RWPE1 (cell line): ENCODE measurements at regions of chr14 and their contacts with region 1.

Region 1: DNA sequence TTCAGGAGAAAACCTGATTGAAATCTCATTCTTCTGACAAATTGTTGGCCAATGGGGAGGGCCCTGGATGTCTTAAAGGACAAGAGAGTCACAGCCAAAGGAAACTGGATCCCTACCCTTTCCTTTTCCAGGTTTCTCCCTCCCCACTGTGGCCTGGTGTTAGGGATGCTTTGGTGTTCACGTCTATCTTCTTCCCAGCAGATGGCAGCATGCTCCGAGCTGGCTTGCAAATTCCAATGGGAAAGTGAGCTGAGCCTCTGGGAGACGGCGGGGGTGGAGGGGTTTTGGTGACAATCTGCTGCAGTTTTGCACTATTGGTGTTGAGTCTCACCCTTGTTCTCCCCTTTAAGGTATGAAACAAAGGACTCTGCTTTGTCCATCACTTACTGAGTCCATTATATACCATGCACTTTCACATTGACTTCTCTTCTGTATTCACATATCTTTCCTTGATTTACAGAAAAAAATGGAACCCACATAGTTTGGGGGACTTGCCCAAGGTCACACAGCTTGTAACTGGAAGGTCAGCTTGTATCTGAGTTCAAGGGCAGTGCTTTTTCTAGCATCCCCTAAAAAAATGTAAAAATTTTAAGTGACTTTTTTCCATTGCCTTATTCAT is 39.3 kb downstream of the CCDC177 start:
- DNase-seq: peak; percentile 76
- H3K27ac ChIP-seq: no peak overlapping the region
- CTCF ChIP-seq: peak; percentile 86

Region 2: DNA sequence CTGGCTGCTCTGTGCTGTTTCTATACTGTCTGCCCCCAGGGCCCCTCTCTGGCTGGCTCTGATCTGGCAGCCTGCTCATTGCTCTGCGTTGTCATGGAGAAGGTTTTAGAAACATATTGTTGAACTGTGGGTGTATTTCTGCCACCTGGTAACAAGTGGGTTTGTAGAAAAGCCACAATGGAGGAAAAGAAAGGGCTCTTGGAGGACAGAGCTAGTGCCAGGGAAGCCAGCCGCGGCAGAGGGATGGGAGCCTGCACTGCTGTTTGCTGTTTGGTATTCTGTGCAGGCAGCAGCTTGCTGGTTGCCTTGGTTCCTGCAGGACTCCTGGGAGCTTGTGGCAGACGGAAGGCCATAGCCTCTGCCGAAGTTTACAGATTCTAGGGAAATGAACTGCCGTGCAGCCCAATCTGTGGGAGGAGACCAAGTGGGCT is 24.3 kb after region 1 on chr14:
- CTCF ChIA-PET with region 1: interaction called, 11 read pairs
- POLR2A ChIA-PET with region 1: no interaction called
- DNase-seq: no peak
- H3K27ac ChIP-seq: no peak overlapping the region
- CTCF ChIP-seq: no peak

Region 3: DNA sequence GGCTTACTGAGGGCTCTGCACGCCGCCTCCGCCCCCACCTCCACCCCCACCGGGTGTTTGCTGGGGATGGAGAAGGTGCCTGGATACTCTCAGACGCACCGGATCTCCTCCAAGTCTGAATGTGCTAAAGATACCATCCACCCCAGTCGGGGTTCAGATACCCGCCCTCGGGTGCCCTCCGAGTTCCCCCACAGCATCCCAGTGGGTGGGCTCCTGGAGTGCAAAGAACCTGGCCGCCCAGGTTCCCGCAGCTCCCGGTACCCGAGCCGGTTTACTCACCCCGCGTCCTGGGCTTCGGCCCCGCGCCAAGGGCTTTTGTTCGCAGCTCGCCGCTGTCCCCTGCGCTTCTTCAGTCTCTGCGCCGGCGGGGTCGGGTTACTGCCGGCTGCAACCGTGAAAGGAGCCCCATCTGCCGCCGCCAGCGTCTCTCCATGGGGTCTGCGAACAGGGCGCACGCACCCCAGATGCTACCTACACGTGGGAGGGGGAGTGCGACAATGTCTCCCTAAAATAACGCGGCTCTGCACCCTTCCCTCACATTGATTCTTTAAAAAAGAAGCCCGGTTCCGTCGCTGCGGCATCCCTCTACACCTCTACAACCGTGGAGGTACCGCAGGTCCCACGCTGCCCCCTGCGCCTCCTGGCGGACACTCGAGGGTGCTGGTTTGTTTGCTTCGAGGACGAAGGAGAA is 39.1 kb after region 1 on chr14 and contains the start of gene CCDC177:
- CTCF ChIA-PET with region 1: interaction called, 26 read pairs
- POLR2A ChIA-PET with region 1: no interaction called
- DNase-seq: peak; percentile 72
- H3K27ac ChIP-seq: no peak within 1 kb of the TSS
- CTCF ChIP-seq: peak; percentile 93

Region 4: DNA sequence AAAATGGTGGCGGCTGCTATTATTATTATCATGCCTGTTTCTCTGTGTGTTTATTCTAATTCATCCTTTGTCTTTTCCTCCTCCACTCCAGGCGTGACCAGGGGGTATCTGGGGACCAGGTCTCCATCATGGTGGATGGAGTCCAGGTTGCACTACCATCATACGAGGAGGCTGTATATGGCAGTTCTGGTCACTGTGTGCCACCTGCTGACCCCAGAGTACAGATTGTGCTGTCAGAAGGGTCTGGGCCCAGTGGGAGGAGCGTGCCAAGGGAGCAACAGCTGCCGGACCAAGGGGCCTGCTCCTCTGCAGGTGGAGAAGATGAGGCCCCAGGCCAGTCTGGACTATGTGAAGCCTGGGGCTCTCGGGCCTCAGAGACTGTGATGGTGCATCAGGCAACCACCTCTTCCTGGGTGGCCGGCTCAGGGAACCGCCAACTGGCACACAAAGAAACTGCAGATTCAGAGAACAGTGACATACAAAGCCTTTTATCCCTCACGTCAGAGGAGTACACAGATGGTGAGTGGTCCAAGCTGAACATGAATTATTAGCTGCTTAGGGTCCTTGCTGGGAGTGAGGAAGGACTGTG is 173.3 kb after region 1 on chr14:
- CTCF ChIA-PET with region 1: no interaction called
- POLR2A ChIA-PET with region 1: no interaction called
- DNase-seq: no peak
- H3K27ac ChIP-seq: no peak overlapping the region
- CTCF ChIP-seq: no peak